ENCODE measurements at regions of chr17 and their contacts with region 1.

Region 1: GRCh38 chr17:63445979-63446691 is at the start of gene CYB561:
- DNase-seq: no peak
- ATAC-seq: peak; percentile 95
- H3K4me3 ChIP-seq: peak within 1 kb of the TSS; percentile 53 to 71
- H3K27ac ChIP-seq: peak within 1 kb of the TSS; percentile 79
- H3K4me1 ChIP-seq: peaks cover 27% of the 10 kb centered on the region
- H3K27me3 ChIP-seq: no peaks in the 10 kb centered on the region
- CTCF ChIP-seq: peak; percentile 85; the same call in 1 of the 2 replicates
- total RNA-seq, gene CYB561: 40.1 TPM

Region 2: DNA sequence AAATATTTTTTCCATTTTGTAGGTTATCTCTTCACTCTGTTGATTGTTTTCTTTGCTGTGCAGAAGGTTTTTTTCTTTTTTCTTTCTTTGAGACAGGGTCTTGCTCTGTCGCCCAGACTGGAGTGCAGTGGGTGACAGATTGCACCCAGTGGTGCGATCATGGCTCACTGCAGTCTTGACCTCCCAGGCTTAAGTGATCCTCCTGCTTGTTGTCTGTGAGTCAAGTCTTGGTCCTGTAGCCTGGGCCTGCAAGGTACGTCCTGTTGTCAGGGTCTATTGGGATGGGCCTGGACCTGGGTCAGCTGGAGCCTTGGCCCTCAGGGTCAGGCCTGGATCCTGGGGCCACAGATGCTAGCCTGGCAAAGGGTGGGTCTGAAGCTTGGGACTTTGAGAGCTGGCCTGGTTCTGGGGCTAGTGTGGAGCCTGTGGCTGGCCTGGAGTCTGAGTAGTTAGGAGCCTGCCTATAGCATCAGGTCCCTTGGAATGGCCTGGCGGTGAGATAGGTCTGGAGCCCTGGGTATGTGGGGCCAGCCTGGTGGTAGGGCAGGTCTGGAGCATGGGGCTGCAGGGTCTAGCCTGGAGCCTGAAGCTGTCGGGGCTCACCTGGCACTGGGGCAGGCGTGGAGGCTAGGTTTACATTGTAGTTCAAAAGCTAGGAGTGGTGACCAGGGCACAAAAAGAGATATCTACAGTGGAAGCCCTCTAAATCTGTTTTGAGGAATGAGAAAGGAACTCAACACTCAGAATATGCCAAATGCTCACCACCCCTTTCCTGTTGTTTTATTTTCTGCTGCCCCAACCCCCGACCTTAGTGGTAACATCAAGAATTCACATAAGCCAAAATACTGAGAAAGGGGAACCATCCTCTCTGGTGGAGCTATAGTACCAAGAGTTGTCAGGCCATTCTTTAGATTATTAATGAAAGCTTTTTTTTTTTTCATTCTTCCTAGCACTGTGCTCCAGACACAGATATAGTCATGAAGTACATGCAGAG is 380.0 kb before region 1 on chr17:
- CTCF ChIA-PET with region 1: no interaction called
- POLR2A ChIA-PET with region 1: interaction called, 11 read pairs
- in situ Hi-C with region 1: no loop called
- intact Hi-C with region 1: no loop called
- DNase-seq: no peak
- ATAC-seq: no peak
- H3K4me3 ChIP-seq: no peak overlapping the region
- H3K27ac ChIP-seq: no peak overlapping the region
- H3K4me1 ChIP-seq: no peaks in the 10 kb centered on the region
- H3K27me3 ChIP-seq: no peaks in the 10 kb centered on the region
- CTCF ChIP-seq: no peak

Region 3: GRCh38 chr17:63827002-63827771 is 381.1 kb after region 1 on chr17 and contains the starts of genes FTSJ3 and PSMC5:
- CTCF ChIA-PET with region 1: no interaction called
- POLR2A ChIA-PET with region 1: no interaction called
- in situ Hi-C with region 1: no loop called
- intact Hi-C with region 1: no loop called
- DNase-seq: peak; percentile 75
- ATAC-seq: peak; percentile 95
- H3K4me3 ChIP-seq: peak within 1 kb of the TSS; percentile 80 to 96
- H3K27ac ChIP-seq: peak within 1 kb of the TSS; percentile 95
- H3K4me1 ChIP-seq: peaks cover 15% of the 10 kb centered on the region
- H3K27me3 ChIP-seq: no peaks in the 10 kb centered on the region
- CTCF ChIP-seq: no peak; the same call in 1 of the 2 replicates
- total RNA-seq, gene FTSJ3: 41.3 TPM
- total RNA-seq, gene PSMC5: 145 TPM

Measured in Panc1 (cell line).